A673 (cell line): ENCODE measurements at regions of chr1 and their contacts with region 1.

Region 1: DNA sequence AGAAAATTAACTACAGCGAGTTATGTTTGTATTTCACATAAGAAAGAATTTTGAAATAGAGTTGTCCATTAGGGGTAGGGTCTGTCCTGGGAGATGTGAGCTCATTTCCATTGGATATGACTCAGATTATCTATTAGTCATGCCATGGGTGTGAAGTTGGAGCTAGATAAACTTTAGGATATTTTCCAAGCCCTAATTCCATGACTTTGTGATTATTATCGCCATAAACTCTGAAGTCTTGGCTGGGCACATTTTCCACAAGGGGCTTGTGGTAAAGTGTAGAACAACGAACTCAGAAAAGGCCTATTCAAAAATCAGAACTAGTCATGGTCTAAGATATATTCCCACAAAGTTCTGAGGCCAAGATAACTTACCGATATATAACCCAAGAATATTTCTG is 396.6 kb downstream of the DPYD start:
- DNase-seq: no peak
- H3K4me3 ChIP-seq: no peak overlapping the region
- H3K27ac ChIP-seq: no peak overlapping the region
- H3K4me1 ChIP-seq: no peaks in the 10 kb centered on the region
- H3K27me3 ChIP-seq: no peaks in the 10 kb centered on the region
- CTCF ChIP-seq: no peak

Region 2: DNA sequence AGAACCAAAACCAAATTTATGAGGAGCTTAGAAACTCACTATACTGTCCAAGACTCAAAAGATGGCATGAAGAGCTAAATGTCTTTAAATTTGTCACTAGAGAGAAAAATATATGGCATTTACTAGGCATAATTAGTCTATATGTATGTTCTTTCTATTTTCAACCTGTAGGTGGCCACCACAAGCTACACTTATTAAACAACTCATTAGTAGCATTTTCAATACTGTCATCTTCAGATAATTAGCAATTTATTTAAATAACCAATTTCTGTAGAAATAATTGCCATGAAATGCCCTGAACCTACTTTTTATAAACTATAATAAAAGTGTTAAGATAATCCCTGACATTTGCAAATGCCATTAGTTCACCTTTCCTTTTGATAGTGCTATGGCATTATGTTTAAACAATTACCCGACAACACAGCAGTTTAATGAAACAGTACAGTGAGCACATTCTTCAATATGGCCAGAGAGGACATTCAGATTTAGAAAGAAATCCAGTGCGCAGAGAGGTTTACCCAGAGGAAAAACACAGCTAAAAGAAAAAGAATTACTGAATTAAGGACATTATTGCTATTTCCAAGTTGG is 280.1 kb before region 1 on chr1:
- CTCF ChIA-PET with region 1: no interaction called
- POLR2A ChIA-PET with region 1: no interaction called
- intact Hi-C with region 1: loop called (anchors 10 kb)
- DNase-seq: peak; percentile 42
- H3K4me3 ChIP-seq: no peak overlapping the region
- H3K27ac ChIP-seq: no peak overlapping the region
- H3K4me1 ChIP-seq: no peaks in the 10 kb centered on the region
- H3K27me3 ChIP-seq: no peaks in the 10 kb centered on the region
- CTCF ChIP-seq: peak; percentile 70

Region 3: GRCh38 chr1:97350662-97351061 is 173.5 kb before region 1 on chr1:
- CTCF ChIA-PET with region 1: no interaction called
- POLR2A ChIA-PET with region 1: no interaction called
- intact Hi-C with region 1: no loop called
- DNase-seq: no peak
- H3K4me3 ChIP-seq: no peak overlapping the region
- H3K27ac ChIP-seq: no peak overlapping the region
- H3K4me1 ChIP-seq: peaks cover 4% of the 10 kb centered on the region
- H3K27me3 ChIP-seq: no peaks in the 10 kb centered on the region
- CTCF ChIP-seq: no peak

Region 4: DNA sequence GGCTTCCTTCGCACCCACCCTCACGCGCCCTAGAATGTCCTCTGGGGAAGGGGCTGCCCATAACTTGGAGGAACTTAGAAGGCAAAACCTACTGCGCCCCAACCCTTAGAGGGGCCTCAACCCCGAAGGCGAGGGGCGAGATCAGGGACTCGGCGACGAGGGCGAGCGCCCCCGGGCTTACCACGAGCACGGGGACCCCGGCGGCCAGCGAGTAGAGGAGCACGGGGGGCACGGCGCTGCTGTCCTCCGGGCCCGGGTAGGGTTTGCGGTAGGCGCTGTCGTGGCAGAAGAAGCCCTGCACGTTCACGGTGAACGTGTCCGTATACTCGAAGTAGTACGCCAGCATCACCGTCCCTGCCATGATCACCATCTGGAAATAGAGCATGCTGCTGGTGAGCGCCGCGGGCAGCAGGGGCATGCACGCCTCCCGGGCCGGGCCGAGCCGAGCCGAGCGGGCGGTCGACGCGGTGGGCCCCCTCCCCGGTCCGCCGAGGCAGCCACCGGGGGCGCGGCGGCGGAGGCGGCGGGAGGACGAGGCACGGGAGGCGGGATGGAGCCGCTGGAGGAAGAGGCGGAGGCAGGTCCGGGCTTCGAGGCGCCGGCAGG is 1480.1 kb after region 1 on chr1:
- CTCF ChIA-PET with region 1: interaction called, 10 read pairs
- POLR2A ChIA-PET with region 1: no interaction called
- intact Hi-C with region 1: no loop called
- DNase-seq: peak; percentile 17
- H3K4me3 ChIP-seq: peak overlapping the region; percentile 36
- H3K27ac ChIP-seq: no peak overlapping the region
- H3K4me1 ChIP-seq: no peaks in the 10 kb centered on the region
- H3K27me3 ChIP-seq: peaks cover 81% of the 10 kb centered on the region
- CTCF ChIP-seq: no peak